A673 (cell line): ENCODE measurements at regions of chr17 and their contacts with region 1.

Region 1: DNA sequence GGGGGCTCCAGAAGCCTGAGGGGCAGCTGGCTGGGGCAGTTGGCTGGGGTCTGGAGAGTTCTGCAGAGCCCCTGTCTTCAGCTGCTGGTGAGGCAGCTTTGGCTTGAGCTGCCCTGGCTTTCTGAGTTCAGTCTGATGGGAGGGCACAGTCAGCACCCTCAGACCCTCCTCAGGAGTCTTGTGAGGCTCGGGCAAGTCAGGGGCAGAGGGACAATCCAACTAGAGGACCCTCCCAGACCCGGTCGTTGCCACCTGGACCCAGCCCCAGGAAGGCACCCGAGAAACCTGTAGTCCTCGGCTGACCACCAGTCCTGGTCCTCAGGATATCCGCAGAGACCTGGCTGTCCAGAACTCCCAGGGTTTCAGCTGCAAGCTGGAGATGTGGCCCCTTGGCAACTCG is 1.9 kb downstream of the CARD14 start:
- DNase-seq: no peak
- H3K4me3 ChIP-seq: no peak overlapping the region
- H3K27ac ChIP-seq: no peak overlapping the region
- H3K4me1 ChIP-seq: no peaks in the 10 kb centered on the region
- H3K27me3 ChIP-seq: no peaks in the 10 kb centered on the region
- CTCF ChIP-seq: no peak

Region 2: DNA sequence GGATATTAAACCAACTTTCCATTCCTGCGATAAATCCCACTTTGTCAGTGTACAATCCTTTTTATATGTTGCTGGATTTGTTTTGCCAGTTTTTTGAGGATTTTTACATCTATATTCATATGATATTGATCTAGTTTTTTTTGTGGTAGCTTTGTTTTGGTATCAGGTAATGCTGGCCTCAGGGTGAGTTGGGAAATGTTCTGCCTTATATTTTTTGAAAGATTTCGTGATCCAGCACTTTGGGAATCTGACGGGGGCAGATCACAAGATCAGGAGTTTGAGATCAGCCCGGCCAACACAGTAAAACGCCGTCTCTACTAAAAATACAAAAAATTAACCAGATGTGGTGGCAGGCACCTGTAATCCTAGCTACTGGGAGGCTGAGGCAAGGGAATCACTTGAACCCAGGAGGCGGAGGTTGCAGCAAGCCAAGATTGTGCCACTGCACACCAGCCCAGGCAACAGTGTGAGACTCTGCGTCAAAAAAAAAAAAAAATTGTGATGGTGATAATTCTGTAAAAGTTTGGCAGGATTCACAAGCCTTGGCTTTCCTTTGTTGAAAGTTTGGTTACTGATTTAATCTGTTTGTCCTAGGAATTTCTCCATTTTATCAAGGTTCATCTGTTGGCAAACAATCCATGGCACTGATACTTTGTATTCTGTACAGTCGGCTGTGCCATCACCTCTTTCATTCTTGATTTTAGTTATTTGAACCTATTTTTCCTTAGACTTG is 40.9 kb before region 1 on chr17:
- CTCF ChIA-PET with region 1: no interaction called
- POLR2A ChIA-PET with region 1: interaction called, 14 read pairs
- intact Hi-C with region 1: no loop called
- DNase-seq: no peak
- H3K4me3 ChIP-seq: no peak overlapping the region
- H3K27ac ChIP-seq: no peak overlapping the region
- H3K4me1 ChIP-seq: no peaks in the 10 kb centered on the region
- H3K27me3 ChIP-seq: peaks cover 5% of the 10 kb centered on the region
- CTCF ChIP-seq: no peak